Mammary epithelial cell (primary cell): ENCODE measurements at regions of chr9 and their contacts with region 1.

Region 1: GRCh38 chr9:70120834-70121510 is 77.3 kb downstream of the MAMDC2 start:
- DNase-seq: peak; percentile 98
- H3K4me3 ChIP-seq: no peak overlapping the region
- H3K27ac ChIP-seq: peak overlapping the region; percentile 72
- H3K4me1 ChIP-seq: peaks cover 66% of the 10 kb centered on the region
- H3K27me3 ChIP-seq: no peaks in the 10 kb centered on the region
- CTCF ChIP-seq: peak in 1 of 2 donors; percentile 46

Region 2: GRCh38 chr9:69637817-69638200 is 483.2 kb before region 1 on chr9:
- CTCF ChIA-PET with region 1: no interaction called
- dilution Hi-C with region 1: no loop called
- in situ Hi-C with region 1: no loop called
- intact Hi-C with region 1: no loop called
- DNase-seq: peak; percentile 52
- H3K4me3 ChIP-seq: no peak overlapping the region
- H3K27ac ChIP-seq: no peak overlapping the region
- H3K4me1 ChIP-seq: peaks cover 5% of the 10 kb centered on the region
- H3K27me3 ChIP-seq: no peaks in the 10 kb centered on the region
- CTCF ChIP-seq: no peak

Region 3: GRCh38 chr9:70258692-70259511 is 137.9 kb after region 1 on chr9 and contains the start of gene SMC5:
- CTCF ChIA-PET with region 1: no interaction called
- dilution Hi-C with region 1: loop called (anchors 5 kb)
- in situ Hi-C with region 1: no loop called
- intact Hi-C with region 1: no loop called
- DNase-seq: peak; percentile 94
- H3K4me3 ChIP-seq: peak within 1 kb of the TSS; percentile 57 to 87 (median 87)
- H3K27ac ChIP-seq: peak within 1 kb of the TSS; percentile 94
- H3K4me1 ChIP-seq: peaks cover 65% of the 10 kb centered on the region
- H3K27me3 ChIP-seq: no peaks in the 10 kb centered on the region
- CTCF ChIP-seq: no peak
- total RNA-seq, gene SMC5: 24.8 to 28.0 TPM

Region 4: GRCh38 chr9:70747261-70747718 is 626.3 kb after region 1 on chr9:
- CTCF ChIA-PET with region 1: no interaction called
- dilution Hi-C with region 1: no loop called
- in situ Hi-C with region 1: no loop called
- intact Hi-C with region 1: no loop called
- DNase-seq: no peak
- H3K4me3 ChIP-seq: no peak overlapping the region
- H3K27ac ChIP-seq: no peak overlapping the region
- H3K4me1 ChIP-seq: no peaks in the 10 kb centered on the region
- H3K27me3 ChIP-seq: no peaks in the 10 kb centered on the region
- CTCF ChIP-seq: no peak